Common myeloid progenitor, CD34-positive (primary cell): ENCODE measurements at regions of chr10 and their contacts with region 1.

Region 1: DNA sequence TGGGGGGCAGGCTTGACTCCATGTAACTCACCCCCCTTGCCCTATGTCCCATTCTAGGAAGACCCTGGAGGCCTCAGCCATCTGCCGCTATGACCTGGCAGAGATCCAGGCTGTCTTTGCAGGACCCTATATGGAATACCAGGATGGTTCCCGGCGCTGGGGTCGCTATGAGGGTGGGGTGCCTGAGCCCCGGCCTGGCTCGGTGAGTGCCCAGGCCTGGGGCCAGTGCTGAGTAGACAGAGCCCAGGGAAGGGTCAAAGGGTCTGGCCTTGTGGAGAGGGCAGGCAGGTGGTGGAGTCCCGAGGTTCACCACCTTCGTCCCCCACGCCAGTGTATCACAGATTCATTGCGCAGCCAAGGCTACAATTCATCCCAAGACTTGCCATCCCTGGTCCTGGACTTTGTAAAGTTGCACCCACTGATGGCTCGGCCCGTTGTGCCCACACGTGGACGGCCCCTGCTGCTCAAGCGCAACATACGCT is 7.5 kb downstream of the MRPL43 start:
- DNase-seq: no peak
- H3K4me3 ChIP-seq: no peak overlapping the region
- H3K27ac ChIP-seq: no peak overlapping the region
- H3K4me1 ChIP-seq: no peaks in the 10 kb centered on the region
- H3K27me3 ChIP-seq: no peaks in the 10 kb centered on the region

Region 2: DNA sequence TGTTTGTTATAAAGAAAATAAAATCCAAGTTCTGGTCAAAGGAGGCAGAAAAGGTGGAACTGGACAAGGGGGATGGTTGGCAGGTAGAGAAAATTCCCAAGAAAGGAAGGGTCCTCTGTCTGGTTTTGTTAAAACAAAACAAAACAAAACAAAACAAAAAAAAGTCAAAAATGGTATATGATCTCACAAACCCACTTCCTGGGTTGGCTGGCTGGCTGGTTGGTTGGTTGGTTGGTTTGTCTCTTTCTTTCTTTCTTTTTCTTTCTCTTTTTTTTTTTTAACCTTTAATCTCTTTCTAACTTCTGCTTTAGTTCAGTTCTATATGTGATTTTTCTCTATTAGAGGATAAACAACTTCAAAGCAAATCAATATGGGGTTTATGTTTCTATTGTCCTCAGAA is 857.1 kb before region 1 on chr10:
- CTCF ChIA-PET with region 1: no interaction called
- POLR2A ChIA-PET with region 1: no interaction called
- DNase-seq: peak in 1 of 3 donors; percentile 18
- H3K4me3 ChIP-seq: no peak overlapping the region
- H3K27ac ChIP-seq: no peak overlapping the region
- H3K4me1 ChIP-seq: no peaks in the 10 kb centered on the region
- H3K27me3 ChIP-seq: no peaks in the 10 kb centered on the region

Region 3: GRCh38 chr10:100759331-100759730 is 220.5 kb before region 1 on chr10:
- CTCF ChIA-PET with region 1: no interaction called
- POLR2A ChIA-PET with region 1: no interaction called
- DNase-seq: no peak
- H3K4me3 ChIP-seq: no peak overlapping the region
- H3K27ac ChIP-seq: no peak overlapping the region
- H3K4me1 ChIP-seq: no peaks in the 10 kb centered on the region
- H3K27me3 ChIP-seq: peaks cover 17 to 91% (median 51%) of the 10 kb centered on the region in 5 experiments

Region 4: GRCh38 chr10:100969187-100970075 is 10.4 kb before region 1 on chr10 and contains the start of gene SEMA4G:
- CTCF ChIA-PET with region 1: interaction called, 16 read pairs
- POLR2A ChIA-PET with region 1: no interaction called
- DNase-seq: peak; percentile 52 to 70 (median 62)
- H3K4me3 ChIP-seq: peak within 1 kb of the TSS; percentile 23 to 79 (median 54)
- H3K27ac ChIP-seq: no peak within 1 kb of the TSS
- H3K4me1 ChIP-seq: peaks cover 0 to 19% (median 13%) of the 10 kb centered on the region in 4 experiments
- H3K27me3 ChIP-seq: peaks cover 0 to 4% (median 2%) of the 10 kb centered on the region in 5 experiments